ENCODE measurements at regions of chr18 and their contacts with region 1.

Region 1: DNA sequence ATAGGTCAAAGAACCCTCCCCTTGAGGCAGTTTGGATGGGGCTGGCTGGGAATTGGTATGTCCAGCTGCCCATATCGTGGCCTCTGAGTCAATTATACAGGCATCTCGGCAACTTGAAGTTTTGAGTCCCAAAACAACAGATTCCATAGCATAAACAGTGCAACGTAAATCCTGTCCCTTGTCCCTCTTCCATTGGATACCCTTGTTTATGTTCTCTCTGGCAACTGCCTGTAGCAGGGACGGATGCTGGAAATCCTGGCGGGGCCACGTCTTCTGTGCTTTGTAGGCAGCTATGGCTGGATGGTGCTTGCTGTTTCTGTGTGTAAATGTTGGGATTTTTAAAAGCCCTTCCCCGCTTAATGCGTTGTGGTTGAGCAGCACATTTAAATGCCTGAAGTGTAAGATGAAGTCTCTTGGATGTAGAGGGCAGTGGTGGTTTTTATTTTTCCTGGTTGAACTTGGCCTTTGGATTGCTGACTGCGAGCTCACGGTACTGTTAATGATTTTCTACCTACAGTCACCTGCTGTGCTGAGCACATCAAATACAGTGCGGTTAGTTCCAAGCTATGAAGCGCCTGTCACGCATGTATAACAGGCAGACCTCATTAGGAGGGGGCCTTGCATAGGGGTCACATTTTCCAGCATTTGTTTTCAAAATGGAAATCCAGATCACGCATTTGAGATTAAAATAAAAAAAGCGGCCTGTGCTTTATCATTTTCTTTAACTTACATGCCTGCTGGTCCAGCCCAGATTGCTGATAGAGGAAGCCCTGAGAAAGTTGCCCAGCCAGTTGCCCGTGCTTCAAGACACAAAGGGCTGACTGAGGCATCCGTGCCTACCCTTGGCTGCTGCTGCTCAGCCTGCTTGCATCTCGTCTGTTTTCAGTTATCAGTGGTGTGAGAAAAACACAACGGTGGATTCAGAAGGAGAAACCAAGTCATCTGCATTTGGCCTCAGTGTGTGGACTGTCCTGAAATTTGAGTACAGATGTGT is 84.7 kb downstream of the NEDD4L start:
- DNase-seq: peak; percentile 64
- H3K4me3 ChIP-seq: no peak overlapping the region
- H3K27ac ChIP-seq: peak overlapping the region in 2 of 4 donors; percentile 50 to 67
- H3K4me1 ChIP-seq: peaks cover 0 to 13% (median 9%) of the 10 kb centered on the region in 4 donors
- H3K27me3 ChIP-seq: no peaks in the 10 kb centered on the region
- CTCF ChIP-seq: no peak
- EP300 ChIP-seq: no peak
- POLR2A ChIP-seq: no peak

Region 2: GRCh38 chr18:57881818-57882413 is 246.8 kb before region 1 on chr18:
- in situ Hi-C with region 1: loop called (anchors 10 to 25 kb)
- intact Hi-C with region 1: loop called (anchors 10 kb)
- DNase-seq: peak; percentile 74
- H3K4me3 ChIP-seq: no peak overlapping the region
- H3K27ac ChIP-seq: no peak overlapping the region
- H3K4me1 ChIP-seq: peaks cover 0 to 3% (median 0%) of the 10 kb centered on the region in 4 donors
- H3K27me3 ChIP-seq: no peaks in the 10 kb centered on the region
- CTCF ChIP-seq: peak; percentile 85 to 91 (median 90)
- EP300 ChIP-seq: no peak
- POLR2A ChIP-seq: no peak

Region 3: GRCh38 chr18:58015065-58015780 is 113.5 kb before region 1 on chr18:
- in situ Hi-C with region 1: no loop called
- intact Hi-C with region 1: no loop called
- DNase-seq: peak; percentile 24
- H3K4me3 ChIP-seq: no peak overlapping the region
- H3K27ac ChIP-seq: no peak overlapping the region
- H3K4me1 ChIP-seq: peaks cover 7 to 27% (median 20%) of the 10 kb centered on the region in 4 donors
- H3K27me3 ChIP-seq: no peaks in the 10 kb centered on the region
- CTCF ChIP-seq: no peak
- EP300 ChIP-seq: no peak
- POLR2A ChIP-seq: no peak